ENCODE measurements at regions of chr19 and their contacts with region 1.

Region 1: GRCh38 chr19:47124937-47125668 is 5.5 kb upstream of the SAE1 start:
- DNase-seq: no peak
- ATAC-seq: peak; percentile 74 to 78
- H3K4me3 ChIP-seq: no peak overlapping the region
- H3K27ac ChIP-seq: no peak overlapping the region
- H3K4me1 ChIP-seq: no peaks in the 10 kb centered on the region
- H3K27me3 ChIP-seq: no peaks in the 10 kb centered on the region

Region 2: GRCh38 chr19:46963093-46963734 is 161.9 kb before region 1 on chr19:
- intact Hi-C with region 1: no loop called
- DNase-seq: no peak
- ATAC-seq: no peak
- H3K4me3 ChIP-seq: no peak overlapping the region
- H3K27ac ChIP-seq: peak overlapping the region; percentile 7
- H3K4me1 ChIP-seq: peaks cover 16% of the 10 kb centered on the region
- H3K27me3 ChIP-seq: no peaks in the 10 kb centered on the region

Region 3: DNA sequence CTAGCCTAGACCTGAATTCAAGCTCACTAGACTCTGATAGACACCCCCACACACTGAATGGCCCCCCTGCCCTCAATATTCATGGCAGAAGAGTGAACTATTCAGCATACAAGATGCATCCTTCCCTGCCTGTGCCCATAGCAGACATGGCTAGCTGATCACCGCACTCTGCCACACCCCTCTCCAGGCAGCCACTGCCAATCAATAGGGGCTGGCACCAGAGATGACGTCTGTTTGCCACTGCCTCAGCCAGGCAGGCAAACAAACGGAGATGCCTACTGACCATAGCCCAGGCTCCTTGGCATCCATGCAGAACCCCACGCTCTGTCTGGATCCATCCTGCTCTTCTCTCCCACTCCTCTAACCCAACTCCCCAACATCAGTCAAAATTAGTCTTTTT is 119.2 kb before region 1 on chr19:
- intact Hi-C with region 1: no loop called
- DNase-seq: no peak
- ATAC-seq: no peak
- H3K4me3 ChIP-seq: no peak overlapping the region
- H3K27ac ChIP-seq: no peak overlapping the region
- H3K4me1 ChIP-seq: peaks cover 8% of the 10 kb centered on the region
- H3K27me3 ChIP-seq: no peaks in the 10 kb centered on the region

Region 4: DNA sequence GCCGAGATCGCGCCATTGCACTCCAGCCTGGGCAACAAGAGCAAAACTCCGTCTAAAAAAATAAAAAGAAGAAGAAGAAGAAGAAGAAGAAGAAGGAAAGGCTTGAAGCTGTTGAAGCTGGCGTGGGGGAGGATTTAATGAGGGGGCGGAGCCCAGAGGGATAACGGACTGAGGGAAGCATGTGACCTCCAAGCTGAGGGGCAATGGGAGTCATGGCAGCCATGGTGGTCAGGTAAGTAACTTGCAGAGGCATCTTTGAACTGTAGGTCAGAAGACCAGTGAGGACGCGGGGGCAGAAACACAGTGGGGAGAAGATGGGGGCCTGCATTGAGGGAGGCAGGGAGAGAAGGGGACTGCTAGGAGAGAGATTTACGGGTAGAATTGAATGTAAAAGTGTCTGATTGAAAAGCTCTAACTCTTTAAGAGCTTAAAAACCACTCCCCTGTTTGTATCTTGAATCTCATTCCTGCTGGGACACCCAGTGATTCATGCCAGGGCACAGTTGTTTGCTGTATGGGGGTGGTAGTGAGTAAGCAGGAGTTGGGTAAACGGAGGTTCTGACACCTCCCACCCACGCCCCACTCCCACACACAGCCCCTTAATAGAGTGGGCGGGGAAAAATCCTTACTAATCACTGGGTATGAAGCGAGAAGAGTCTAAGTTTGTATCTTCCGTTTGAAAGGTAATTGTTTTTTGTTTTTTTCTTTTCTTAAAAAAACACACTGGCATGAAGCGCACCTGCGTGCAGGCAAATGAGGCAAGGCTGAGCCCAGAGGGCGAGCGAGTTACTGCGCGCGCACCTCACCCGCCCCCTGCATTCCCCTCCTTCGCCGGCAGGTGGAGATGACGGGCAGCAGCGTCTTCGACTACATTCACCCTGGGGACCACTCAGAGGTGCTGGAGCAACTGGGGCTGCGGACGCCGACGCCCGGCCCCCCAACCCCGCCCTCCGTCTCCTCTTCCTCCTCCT is 89.7 kb before region 1 on chr19:
- intact Hi-C with region 1: loop called (anchors 5 to 10 kb)
- DNase-seq: peak; percentile 78 to 95 (median 93)
- ATAC-seq: peak; percentile 87 to 89
- H3K4me3 ChIP-seq: peak overlapping the region; percentile 63
- H3K27ac ChIP-seq: no peak overlapping the region
- H3K4me1 ChIP-seq: no peaks in the 10 kb centered on the region
- H3K27me3 ChIP-seq: no peaks in the 10 kb centered on the region

Region 5: DNA sequence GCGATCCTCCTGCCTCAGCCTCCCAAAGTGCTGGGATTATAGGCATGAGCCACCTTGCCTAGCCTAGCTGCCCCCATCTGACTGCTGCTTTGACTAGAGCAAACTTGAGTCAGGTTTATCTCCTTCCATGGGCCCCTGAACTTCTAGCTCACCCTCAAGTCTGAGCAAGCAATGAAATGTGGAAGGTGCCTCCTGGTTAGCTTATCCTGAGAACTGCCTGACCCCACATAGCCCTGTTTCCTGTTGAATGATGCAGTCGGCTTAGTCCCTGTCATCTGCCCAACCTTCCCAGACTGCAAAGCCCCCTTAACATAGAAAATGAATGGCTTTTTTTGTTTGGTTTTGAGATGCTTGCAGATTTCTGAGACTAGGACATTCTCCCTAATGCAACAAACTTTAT is 67.8 kb before region 1 on chr19:
- intact Hi-C with region 1: no loop called
- DNase-seq: no peak
- ATAC-seq: no peak
- H3K4me3 ChIP-seq: no peak overlapping the region
- H3K27ac ChIP-seq: no peak overlapping the region
- H3K4me1 ChIP-seq: no peaks in the 10 kb centered on the region
- H3K27me3 ChIP-seq: no peaks in the 10 kb centered on the region

Region 6: DNA sequence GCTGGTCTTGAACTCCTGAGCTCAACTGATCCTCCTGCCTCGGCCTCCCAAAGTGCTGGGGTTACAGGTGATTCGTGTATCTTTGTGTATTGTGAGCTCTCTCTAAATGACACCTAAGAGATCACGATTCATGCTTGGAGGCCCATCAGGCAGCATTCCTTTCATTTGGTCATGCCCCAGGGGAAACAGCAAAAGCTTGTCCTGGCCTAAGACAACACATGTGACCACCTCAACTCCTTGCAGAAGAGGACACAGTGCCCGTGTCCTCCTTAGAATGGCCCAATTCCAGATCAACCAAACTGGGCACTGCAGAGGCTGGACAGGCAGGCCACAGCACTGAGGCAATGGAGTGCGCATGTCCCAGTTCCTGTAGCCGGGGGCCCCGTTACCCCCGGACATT is 44.0 kb before region 1 on chr19:
- intact Hi-C with region 1: loop called in 3 of 4 experiments (anchors 1 to 5 kb)
- DNase-seq: no peak
- ATAC-seq: no peak
- H3K4me3 ChIP-seq: no peak overlapping the region
- H3K27ac ChIP-seq: no peak overlapping the region
- H3K4me1 ChIP-seq: peaks cover 2% of the 10 kb centered on the region
- H3K27me3 ChIP-seq: no peaks in the 10 kb centered on the region

Measured in right cardiac atrium (tissue), 5 donors.